BJ (cell line): ENCODE measurements at regions of chr4 and their contacts with region 1.

Region 1: DNA sequence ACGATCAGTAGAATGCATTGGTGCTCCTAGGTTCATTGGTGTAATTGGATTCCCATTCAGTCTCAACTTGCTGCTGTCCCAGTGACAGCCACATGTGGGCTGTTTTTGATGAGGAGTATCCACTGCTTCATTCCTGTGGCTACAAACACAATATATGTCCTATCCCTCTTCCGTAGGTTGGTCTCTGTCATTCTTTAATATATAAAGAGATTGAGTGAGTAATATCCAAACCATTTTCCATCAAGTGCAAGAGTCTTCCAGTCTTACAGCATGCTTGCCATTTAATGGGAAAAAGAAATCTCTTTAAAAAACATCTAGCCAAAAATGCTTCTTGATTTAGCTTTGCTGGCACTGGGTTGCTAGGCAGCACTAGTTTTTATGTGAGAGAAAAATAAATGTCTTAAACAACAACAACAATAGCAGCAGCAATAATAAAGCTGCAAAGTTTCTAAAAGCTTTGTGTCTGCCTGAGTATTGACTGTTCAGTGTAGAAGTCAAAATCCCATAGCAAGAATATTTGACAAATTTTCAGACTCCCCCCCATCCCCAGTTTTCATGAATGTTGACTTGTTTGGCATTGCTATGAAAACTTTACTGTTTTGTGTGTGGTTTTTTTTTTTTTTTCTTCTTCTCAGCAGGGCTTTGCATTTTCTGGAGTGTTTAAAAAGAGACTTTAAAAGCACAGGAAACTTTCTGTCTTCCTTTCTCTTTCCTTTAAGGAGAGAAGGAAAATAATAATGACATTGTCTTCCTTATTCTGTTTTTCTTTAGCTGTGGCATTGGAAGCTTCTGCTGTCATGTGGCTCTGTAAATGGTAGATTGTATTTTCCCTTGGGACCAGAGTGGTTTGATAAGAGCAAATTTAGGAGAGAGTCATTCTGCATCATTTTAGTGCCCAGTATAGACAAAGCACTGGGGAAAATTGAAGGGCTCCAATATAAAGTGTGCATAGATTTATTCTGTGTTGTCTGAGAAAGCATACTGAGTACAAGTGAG is 244.3 kb downstream of the ARHGAP10 start:
- DNase-seq: peak; percentile 19
- H3K4me3 ChIP-seq: no peak overlapping the region
- H3K27me3 ChIP-seq: no peaks in the 10 kb centered on the region
- CTCF ChIP-seq: no peak

Region 2: GRCh38 chr4:148034552-148035219 is 58.5 kb after region 1 on chr4:
- CTCF ChIA-PET with region 1: interaction called, 3 read pairs
- POLR2A ChIA-PET with region 1: interaction called, 14 read pairs
- DNase-seq: no peak
- H3K4me3 ChIP-seq: no peak overlapping the region
- H3K27me3 ChIP-seq: no peaks in the 10 kb centered on the region
- CTCF ChIP-seq: no peak